IMR-90 (cell line): ENCODE measurements at regions of chr17 and their contacts with region 1.

Region 1: GRCh38 chr17:44400226-44400847 is 10.9 kb upstream of the ITGA2B start:
- DNase-seq: peak; percentile 41
- ATAC-seq: peak; percentile 89
- H3K4me3 ChIP-seq: no peak overlapping the region
- H3K27ac ChIP-seq: no peak overlapping the region
- H3K4me1 ChIP-seq: no peaks in the 10 kb centered on the region
- H3K27me3 ChIP-seq: no peaks in the 10 kb centered on the region
- CTCF ChIP-seq: peak; percentile 66
- POLR2A ChIP-seq: no peak
- RAD21 ChIP-seq: peak; percentile 65

Region 2: GRCh38 chr17:44642834-44643233 is 242.5 kb after region 1 on chr17:
- CTCF ChIA-PET with region 1: no interaction called
- POLR2A ChIA-PET with region 1: no interaction called
- dilution Hi-C with region 1: no loop called
- in situ Hi-C with region 1: loop called (anchors 10 kb)
- intact Hi-C with region 1: no loop called
- DNase-seq: no peak
- ATAC-seq: no peak
- H3K4me3 ChIP-seq: no peak overlapping the region
- H3K27ac ChIP-seq: no peak overlapping the region
- H3K4me1 ChIP-seq: no peaks in the 10 kb centered on the region
- H3K27me3 ChIP-seq: peaks cover 7% of the 10 kb centered on the region
- CTCF ChIP-seq: no peak
- POLR2A ChIP-seq: no peak
- RAD21 ChIP-seq: no peak